ENCODE measurements at regions of chr10 and their contacts with region 1.

Region 1: DNA sequence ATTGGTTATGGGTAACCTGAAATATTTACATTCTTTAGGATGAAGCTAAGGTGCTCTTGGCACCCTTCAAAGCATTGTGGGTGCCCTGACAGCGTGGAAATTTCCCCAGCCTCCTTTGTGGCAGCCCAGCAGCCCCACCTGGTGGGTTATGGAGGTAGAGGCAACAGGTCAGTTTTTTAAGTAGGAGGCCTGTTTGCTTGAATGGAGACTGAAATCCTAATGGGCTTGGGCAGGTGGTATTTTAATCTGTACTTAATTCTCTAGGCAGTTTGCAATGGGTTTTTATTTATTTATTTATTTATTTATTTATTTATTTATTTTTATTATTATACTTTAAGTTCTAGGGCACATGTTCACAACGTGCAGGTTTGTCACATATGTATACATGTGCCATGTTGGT is 139.4 kb downstream of the EPC1 start:
- DNase-seq: peak; percentile 73
- H3K4me3 ChIP-seq: no peak overlapping the region
- H3K27ac ChIP-seq: no peak overlapping the region
- H3K4me1 ChIP-seq: peaks cover 22% of the 10 kb centered on the region
- H3K27me3 ChIP-seq: no peaks in the 10 kb centered on the region
- CTCF ChIP-seq: peak; percentile 68 to 79
- POLR2A ChIP-seq: no peak

Region 2: GRCh38 chr10:31179091-31179680 is 1028.4 kb before region 1 on chr10:
- CTCF ChIA-PET with region 1: no interaction called
- POLR2A ChIA-PET with region 1: no interaction called
- dilution Hi-C with region 1: no loop called
- intact Hi-C with region 1: no loop called
- DNase-seq: peak; percentile 20
- H3K4me3 ChIP-seq: no peak overlapping the region
- H3K27ac ChIP-seq: no peak overlapping the region
- H3K4me1 ChIP-seq: no peaks in the 10 kb centered on the region
- H3K27me3 ChIP-seq: no peaks in the 10 kb centered on the region
- CTCF ChIP-seq: no peak
- POLR2A ChIP-seq: no peak

Region 3: DNA sequence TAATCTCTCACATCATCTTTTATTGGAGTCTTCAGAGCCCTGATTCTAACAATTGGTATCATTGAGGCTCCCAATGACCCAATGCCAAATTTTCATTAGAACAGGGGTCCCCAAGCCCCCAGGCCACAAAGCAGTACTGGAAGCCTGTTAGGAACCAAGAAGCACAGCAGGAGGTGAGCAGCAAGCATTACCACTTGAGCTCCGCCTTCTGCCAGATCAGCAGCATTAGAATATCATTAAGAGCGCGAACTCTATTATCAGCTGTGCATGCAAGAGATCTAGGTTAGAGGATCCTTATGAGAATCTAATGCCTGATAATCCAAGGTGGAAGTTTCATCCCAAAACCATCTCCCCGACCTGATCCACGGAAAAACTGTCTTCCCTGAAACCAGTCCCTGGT is 174.4 kb before region 1 on chr10:
- CTCF ChIA-PET with region 1: interaction called, 11 read pairs
- POLR2A ChIA-PET with region 1: no interaction called
- dilution Hi-C with region 1: no loop called
- intact Hi-C with region 1: no loop called
- DNase-seq: no peak
- H3K4me3 ChIP-seq: no peak overlapping the region
- H3K27ac ChIP-seq: no peak overlapping the region
- H3K4me1 ChIP-seq: no peaks in the 10 kb centered on the region
- H3K27me3 ChIP-seq: no peaks in the 10 kb centered on the region
- CTCF ChIP-seq: no peak
- POLR2A ChIP-seq: no peak

Region 4: GRCh38 chr10:32055813-32056600 is 151.5 kb before region 1 on chr10 and contains the start of gene KIF5B:
- CTCF ChIA-PET with region 1: interaction called, 9 read pairs
- POLR2A ChIA-PET with region 1: no interaction called
- dilution Hi-C with region 1: no loop called
- intact Hi-C with region 1: loop called (anchors 2 kb)
- DNase-seq: peak; percentile 91
- H3K4me3 ChIP-seq: peak within 1 kb of the TSS; percentile 80 to 98 (median 81)
- H3K27ac ChIP-seq: peak within 1 kb of the TSS; percentile 79
- H3K4me1 ChIP-seq: peaks cover 33% of the 10 kb centered on the region
- H3K27me3 ChIP-seq: no peaks in the 10 kb centered on the region
- CTCF ChIP-seq: no peak
- POLR2A ChIP-seq: peak; percentile 99
- total RNA-seq, gene KIF5B: 152 and 159 TPM in 2 replicates

Region 5: GRCh38 chr10:32131388-32131787 is 76.2 kb before region 1 on chr10:
- CTCF ChIA-PET with region 1: no interaction called
- POLR2A ChIA-PET with region 1: no interaction called
- dilution Hi-C with region 1: no loop called
- intact Hi-C with region 1: loop called (anchors 1 kb)
- DNase-seq: peak; percentile 74
- H3K4me3 ChIP-seq: no peak overlapping the region
- H3K27ac ChIP-seq: peak overlapping the region; percentile 69
- H3K4me1 ChIP-seq: peaks cover 16% of the 10 kb centered on the region
- H3K27me3 ChIP-seq: peaks cover 0 to 2% of the 10 kb centered on the region in 2 experiments
- CTCF ChIP-seq: no peak
- POLR2A ChIP-seq: no peak

Region 6: GRCh38 chr10:32139223-32140073 is 68.1 kb before region 1 on chr10:
- CTCF ChIA-PET with region 1: interaction called, 17 read pairs
- POLR2A ChIA-PET with region 1: no interaction called
- dilution Hi-C with region 1: no loop called
- intact Hi-C with region 1: loop called (anchors 2 kb)
- DNase-seq: peak; percentile 94
- H3K4me3 ChIP-seq: no peak overlapping the region
- H3K27ac ChIP-seq: peak overlapping the region; percentile 67
- H3K4me1 ChIP-seq: peaks cover 24% of the 10 kb centered on the region
- H3K27me3 ChIP-seq: no peaks in the 10 kb centered on the region
- CTCF ChIP-seq: peak in 1 of 2 donors; percentile 15
- POLR2A ChIP-seq: no peak

Region 7: GRCh38 chr10:32155042-32155531 is 52.5 kb before region 1 on chr10:
- CTCF ChIA-PET with region 1: no interaction called
- POLR2A ChIA-PET with region 1: no interaction called
- dilution Hi-C with region 1: no loop called
- intact Hi-C with region 1: loop called (anchors 5 kb)
- DNase-seq: peak; percentile 90
- H3K4me3 ChIP-seq: no peak overlapping the region
- H3K27ac ChIP-seq: peak overlapping the region; percentile 47
- H3K4me1 ChIP-seq: peaks cover 23% of the 10 kb centered on the region
- H3K27me3 ChIP-seq: no peaks in the 10 kb centered on the region
- CTCF ChIP-seq: no peak
- POLR2A ChIP-seq: no peak

Region 8: GRCh38 chr10:32190890-32191491 is 16.6 kb before region 1 on chr10:
- CTCF ChIA-PET with region 1: interaction called, 43 read pairs
- POLR2A ChIA-PET with region 1: interaction called, 5 read pairs
- dilution Hi-C with region 1: no loop called
- intact Hi-C with region 1: loop called (anchors 1 kb)
- DNase-seq: peak; percentile 76
- H3K4me3 ChIP-seq: no peak overlapping the region
- H3K27ac ChIP-seq: no peak overlapping the region
- H3K4me1 ChIP-seq: peaks cover 7% of the 10 kb centered on the region
- H3K27me3 ChIP-seq: peaks cover 0 to 1% of the 10 kb centered on the region in 2 experiments
- CTCF ChIP-seq: peak; percentile 42 to 53
- POLR2A ChIP-seq: no peak

Measured in endothelial cell of umbilical vein (primary cell).